ENCODE measurements at regions of chr2 and their contacts with region 1.

Region 1: DNA sequence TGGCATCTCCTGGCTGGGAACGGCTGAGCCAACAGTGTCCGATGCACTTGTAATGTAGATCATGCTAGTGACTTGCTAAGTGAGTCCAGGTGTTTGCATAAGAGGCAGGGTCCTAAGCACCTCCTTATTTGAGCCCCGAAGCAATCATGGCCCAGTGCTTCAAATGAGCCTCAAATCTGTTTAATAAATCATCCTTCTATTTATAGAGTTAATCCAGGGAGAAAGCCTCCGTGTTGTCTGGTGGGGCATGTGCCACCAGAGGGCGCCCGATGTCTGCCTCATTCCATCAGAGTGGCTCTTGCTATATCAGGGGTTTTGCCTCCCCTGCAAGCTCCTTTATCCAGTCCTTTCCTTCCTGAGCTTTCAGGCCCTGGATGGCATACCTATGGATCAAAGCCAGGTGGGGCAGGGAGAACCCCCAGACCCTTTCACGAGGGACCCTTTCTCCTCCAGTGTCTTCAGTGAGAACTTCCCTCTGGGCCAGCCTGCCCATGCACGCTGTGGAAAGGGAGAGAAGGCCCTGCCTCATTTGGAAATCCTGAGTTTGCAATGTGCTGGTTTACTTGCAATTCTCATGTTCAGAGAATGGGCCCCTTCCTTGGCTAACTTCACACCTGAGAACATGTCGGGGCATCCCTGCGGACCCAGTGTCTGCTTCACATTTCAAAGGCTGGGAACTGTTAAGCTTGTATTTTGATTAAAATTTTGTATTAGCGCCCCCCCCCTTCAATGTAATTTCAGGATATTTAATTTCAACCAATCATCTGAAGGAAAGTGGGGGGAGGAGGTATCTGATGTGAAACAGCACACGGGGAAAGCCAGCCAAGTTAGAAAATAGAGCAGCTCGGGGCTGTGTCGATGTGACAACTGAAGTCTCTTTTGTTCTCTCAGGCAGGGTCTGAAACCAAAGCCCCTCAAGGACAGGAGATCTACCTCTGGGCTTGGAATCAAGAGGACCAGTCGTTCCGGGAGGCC is 39.7 kb downstream of the RDH14 start:
- DNase-seq: peak; percentile 77
- H3K4me3 ChIP-seq: no peak overlapping the region
- H3K27ac ChIP-seq: no peak overlapping the region
- H3K4me1 ChIP-seq: no peaks in the 10 kb centered on the region
- H3K27me3 ChIP-seq: no peaks in the 10 kb centered on the region
- CTCF ChIP-seq: peak; percentile 82 to 89 (median 87)
- POLR2A ChIP-seq: no peak

Region 2: DNA sequence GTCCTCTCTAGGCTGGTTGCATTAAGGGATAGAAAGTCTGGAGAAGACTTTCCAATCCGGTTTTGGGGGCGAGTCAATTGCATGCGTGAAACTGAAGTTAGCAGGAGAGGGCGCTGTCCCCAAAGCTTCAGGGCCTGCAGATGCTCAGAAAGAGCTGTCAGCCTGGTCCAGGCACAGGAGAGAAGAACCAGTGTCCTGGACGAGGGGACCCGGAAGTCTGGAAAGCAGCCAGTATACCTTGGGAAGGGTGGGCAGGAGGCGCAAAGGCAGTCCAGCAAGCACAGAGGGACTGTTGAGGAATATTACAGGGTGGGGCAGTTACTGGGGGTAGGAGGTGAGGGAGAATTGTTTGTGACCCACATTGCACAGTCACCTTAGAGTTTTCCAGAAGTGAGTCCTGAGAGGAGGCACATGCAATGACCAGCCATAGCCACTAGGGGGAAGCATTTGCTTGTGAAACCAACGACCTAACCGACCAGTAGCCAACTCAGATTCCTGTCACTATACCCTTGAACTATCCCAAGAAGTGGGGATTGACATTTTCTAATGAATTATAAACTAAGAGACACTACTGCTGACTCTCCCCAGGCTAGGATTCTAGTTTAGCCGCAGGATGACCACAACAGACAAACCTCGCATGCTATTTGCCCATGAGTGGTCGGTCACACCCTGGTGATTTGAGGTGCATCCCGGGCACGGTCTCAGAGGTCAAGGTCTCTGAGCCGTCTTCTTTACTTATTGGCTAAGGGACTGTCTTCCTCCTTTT is 133.1 kb before region 1 on chr2:
- intact Hi-C with region 1: loop called (anchors 5 kb)
- DNase-seq: peak; percentile 61
- H3K4me3 ChIP-seq: no peak overlapping the region
- H3K27ac ChIP-seq: no peak overlapping the region
- H3K4me1 ChIP-seq: no peaks in the 10 kb centered on the region
- H3K27me3 ChIP-seq: no peaks in the 10 kb centered on the region
- CTCF ChIP-seq: peak; percentile 77 to 98 (median 86)
- POLR2A ChIP-seq: no peak

Region 3: GRCh38 chr2:18473241-18474181 is 47.2 kb before region 1 on chr2:
- intact Hi-C with region 1: loop called (anchors 5 kb)
- DNase-seq: no peak
- H3K4me3 ChIP-seq: no peak overlapping the region
- H3K27ac ChIP-seq: no peak overlapping the region
- H3K4me1 ChIP-seq: no peaks in the 10 kb centered on the region
- H3K27me3 ChIP-seq: no peaks in the 10 kb centered on the region
- CTCF ChIP-seq: no peak
- POLR2A ChIP-seq: no peak

Region 4: DNA sequence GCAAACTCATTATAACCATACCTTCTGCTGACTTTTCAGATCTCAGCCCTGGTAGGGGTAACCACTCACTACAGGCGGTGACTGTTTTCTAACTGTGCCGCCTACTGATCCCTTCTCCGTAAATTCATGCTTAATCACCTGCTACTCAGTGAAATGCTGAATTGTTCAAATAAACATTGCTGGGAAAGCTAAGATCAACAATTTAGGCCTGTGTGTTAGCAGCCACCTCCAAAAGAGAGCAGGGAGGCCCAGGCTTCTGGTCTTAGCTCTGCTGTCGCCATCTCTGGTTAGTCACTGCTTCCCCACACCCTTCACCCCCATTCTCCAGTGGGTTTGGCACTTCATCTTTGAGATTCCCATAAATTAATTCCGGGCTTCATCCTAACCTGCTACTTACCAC is 90.4 kb after region 1 on chr2:
- intact Hi-C with region 1: no loop called
- DNase-seq: no peak
- H3K4me3 ChIP-seq: no peak overlapping the region
- H3K27ac ChIP-seq: no peak overlapping the region
- H3K4me1 ChIP-seq: no peaks in the 10 kb centered on the region
- H3K27me3 ChIP-seq: no peaks in the 10 kb centered on the region
- CTCF ChIP-seq: no peak
- POLR2A ChIP-seq: no peak

Region 5: GRCh38 chr2:18741895-18742732 is 221.4 kb after region 1 on chr2:
- intact Hi-C with region 1: loop called (anchors 2 kb)
- DNase-seq: no peak
- H3K4me3 ChIP-seq: no peak overlapping the region
- H3K27ac ChIP-seq: no peak overlapping the region
- H3K4me1 ChIP-seq: no peaks in the 10 kb centered on the region
- H3K27me3 ChIP-seq: no peaks in the 10 kb centered on the region
- CTCF ChIP-seq: no peak
- POLR2A ChIP-seq: no peak

Region 6: DNA sequence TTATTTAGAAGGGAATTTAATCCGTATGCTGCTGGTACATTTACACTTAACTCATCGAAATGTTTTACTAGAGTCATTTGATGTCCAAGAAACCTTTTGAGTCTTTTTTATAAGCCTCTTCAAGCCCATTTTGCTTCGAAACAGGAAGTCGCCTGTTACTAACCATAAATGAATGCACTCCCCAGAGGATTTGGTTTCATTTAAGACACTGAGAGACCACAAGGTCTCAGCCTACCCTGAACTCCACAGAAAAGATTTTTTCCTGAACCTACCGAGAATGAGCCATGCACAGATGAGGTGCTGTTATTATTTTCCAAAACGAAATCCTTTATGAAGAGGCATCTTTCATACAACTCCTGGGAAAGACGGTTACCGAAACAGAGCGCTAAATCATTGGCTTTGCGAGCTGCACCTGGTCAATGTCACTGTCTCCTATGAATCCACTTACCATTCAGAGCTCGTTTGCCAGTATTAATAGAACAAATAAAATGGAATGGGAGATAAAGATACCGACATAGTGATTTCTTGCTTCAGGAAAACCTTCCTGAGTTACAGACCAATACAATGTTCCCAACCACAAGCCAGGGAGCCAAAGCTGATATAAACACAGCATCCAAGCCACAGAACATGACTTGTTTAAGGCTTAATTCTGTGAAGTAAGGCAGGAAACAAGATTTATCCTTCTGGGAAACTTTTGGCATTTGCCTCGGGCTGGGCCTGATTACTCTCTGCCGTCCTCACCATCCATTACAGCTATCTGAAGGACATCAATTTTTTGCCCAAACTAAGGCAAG is 455.6 kb after region 1 on chr2:
- intact Hi-C with region 1: loop called (anchors 5 kb)
- DNase-seq: no peak
- H3K4me3 ChIP-seq: peak overlapping the region in 1 of 2 donors; percentile 15
- H3K27ac ChIP-seq: peak overlapping the region; percentile 58 to 62
- H3K4me1 ChIP-seq: no peaks in the 10 kb centered on the region
- H3K27me3 ChIP-seq: no peaks in the 10 kb centered on the region
- CTCF ChIP-seq: no peak
- POLR2A ChIP-seq: no peak

Region 7: GRCh38 chr2:19754907-19755306 is 1234.2 kb after region 1 on chr2:
- intact Hi-C with region 1: loop called (anchors 10 kb)
- DNase-seq: no peak
- H3K4me3 ChIP-seq: no peak overlapping the region
- H3K27ac ChIP-seq: no peak overlapping the region
- H3K4me1 ChIP-seq: no peaks in the 10 kb centered on the region
- H3K27me3 ChIP-seq: no peaks in the 10 kb centered on the region
- CTCF ChIP-seq: no peak
- POLR2A ChIP-seq: no peak

Measured in prostate gland (tissue), 2 donors.